Mammary epithelial cell (primary cell): ENCODE measurements at regions of chr18 and their contacts with region 1.

Region 1: GRCh38 chr18:48622911-48623431 is 84.1 kb downstream of the CTIF start:
- DNase-seq: peak; percentile 58
- H3K4me3 ChIP-seq: no peak overlapping the region
- H3K27ac ChIP-seq: peak overlapping the region; percentile 57
- H3K4me1 ChIP-seq: peaks cover 37% of the 10 kb centered on the region
- H3K27me3 ChIP-seq: no peaks in the 10 kb centered on the region
- CTCF ChIP-seq: no peak

Region 2: GRCh38 chr18:48545757-48546321 is 77.1 kb before region 1 on chr18:
- CTCF ChIA-PET with region 1: no interaction called
- dilution Hi-C with region 1: loop called (anchors 5 kb)
- in situ Hi-C with region 1: no loop called
- intact Hi-C with region 1: loop called (anchors 1 kb)
- DNase-seq: peak; percentile 79
- H3K4me3 ChIP-seq: no peak overlapping the region
- H3K27ac ChIP-seq: peak overlapping the region; percentile 83
- H3K4me1 ChIP-seq: peaks cover 76% of the 10 kb centered on the region
- H3K27me3 ChIP-seq: no peaks in the 10 kb centered on the region
- CTCF ChIP-seq: no peak

Region 3: GRCh38 chr18:48605408-48605845 is 17.5 kb before region 1 on chr18:
- CTCF ChIA-PET with region 1: no interaction called
- dilution Hi-C with region 1: no loop called
- in situ Hi-C with region 1: no loop called
- intact Hi-C with region 1: loop called (anchors 2 kb)
- DNase-seq: no peak
- H3K4me3 ChIP-seq: no peak overlapping the region
- H3K27ac ChIP-seq: no peak overlapping the region
- H3K4me1 ChIP-seq: peaks cover 16% of the 10 kb centered on the region
- H3K27me3 ChIP-seq: no peaks in the 10 kb centered on the region
- CTCF ChIP-seq: peak; percentile 19 to 21